HCT116 (cell line): ENCODE measurements at regions of chr4 and their contacts with region 1.

Region 1: GRCh38 chr4:125283707-125284279 is 31.0 kb upstream of the FAT4 start:
- DNase-seq: peak; percentile 18
- ATAC-seq: peak; percentile 53; the same call in 1 of the 2 replicates
- H3K4me3 ChIP-seq: no peak overlapping the region
- H3K27ac ChIP-seq: no peak overlapping the region
- H3K4me1 ChIP-seq: no peaks in the 10 kb centered on the region
- H3K27me3 ChIP-seq: no peaks in the 10 kb centered on the region
- CTCF ChIP-seq: peak; percentile 22 to 68 (median 55); a peak in 4 of 6 replicates
- POLR2A ChIP-seq: no peak
- RAD21 ChIP-seq: peak; percentile 75

Region 2: GRCh38 chr4:123776254-123776653 is 1507.5 kb before region 1 on chr4:
- CTCF ChIA-PET with region 1: no interaction called
- POLR2A ChIA-PET with region 1: no interaction called
- RAD21 ChIA-PET with region 1: no interaction called
- intact Hi-C with region 1: loop called (anchors 10 kb)
- DNase-seq: no peak
- ATAC-seq: no peak
- H3K4me3 ChIP-seq: no peak overlapping the region
- H3K27ac ChIP-seq: no peak overlapping the region
- H3K4me1 ChIP-seq: no peaks in the 10 kb centered on the region
- H3K27me3 ChIP-seq: no peaks in the 10 kb centered on the region
- CTCF ChIP-seq: no peak
- POLR2A ChIP-seq: no peak
- RAD21 ChIP-seq: no peak

Region 3: DNA sequence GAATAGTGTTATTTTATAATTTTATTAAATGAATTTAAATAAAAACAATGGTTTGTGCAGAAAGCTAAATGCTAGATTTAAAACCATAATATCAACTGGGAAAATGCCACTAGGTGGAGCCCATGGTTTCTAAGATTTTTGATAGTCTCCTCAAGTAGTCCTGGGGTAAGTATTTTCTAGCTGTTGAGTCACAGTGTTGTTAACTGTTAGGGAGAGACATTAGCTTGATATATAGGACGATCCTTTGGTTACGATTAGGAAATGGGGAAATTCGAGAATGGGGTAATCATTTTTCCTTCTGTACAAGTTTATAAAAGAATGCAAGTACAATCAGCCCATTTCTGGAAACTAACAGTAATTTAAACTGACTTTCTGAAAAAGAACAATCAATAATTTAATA is 949.7 kb before region 1 on chr4:
- CTCF ChIA-PET with region 1: interaction called, 33 read pairs
- POLR2A ChIA-PET with region 1: no interaction called
- RAD21 ChIA-PET with region 1: interaction called, 5 to 6 read pairs
- intact Hi-C with region 1: loop called (anchors 1 kb)
- DNase-seq: peak; percentile 60
- ATAC-seq: peak; percentile 91
- H3K4me3 ChIP-seq: 0 out of 4 replicates have a peak overlapping the region, but pooled peaks of 1 of the 2 experiments have one; percentile 8
- H3K27ac ChIP-seq: no peak overlapping the region
- H3K4me1 ChIP-seq: peaks cover 0 to 3% of the 10 kb centered on the region in 2 experiments; a peak in 1 of 4 replicates
- H3K27me3 ChIP-seq: no peaks in the 10 kb centered on the region
- CTCF ChIP-seq: peak; percentile 48 to 70 (median 48); a peak in 5 of 6 replicates
- POLR2A ChIP-seq: no peak
- RAD21 ChIP-seq: peak; percentile 85

Region 4: DNA sequence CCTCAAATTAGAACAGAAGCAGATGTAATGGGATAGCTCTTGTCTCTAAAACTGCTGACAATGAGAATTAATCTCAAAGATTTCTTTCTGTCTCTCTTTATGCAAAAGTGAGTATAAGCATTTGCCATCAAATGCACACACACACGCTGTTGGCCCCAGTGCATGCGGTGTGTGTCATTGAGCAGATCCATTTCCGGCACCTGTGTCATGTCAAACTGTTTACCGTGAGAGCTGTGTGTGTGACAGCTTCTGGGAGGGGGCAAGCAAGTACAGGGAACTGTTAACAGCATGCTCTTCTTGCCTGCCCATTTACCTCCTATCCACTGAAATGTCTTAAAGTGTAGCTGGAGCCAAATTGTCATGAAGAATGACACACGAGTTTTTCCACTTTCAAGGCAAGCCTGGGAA is 266.9 kb before region 1 on chr4:
- CTCF ChIA-PET with region 1: no interaction called
- POLR2A ChIA-PET with region 1: no interaction called
- RAD21 ChIA-PET with region 1: no interaction called
- intact Hi-C with region 1: no loop called
- DNase-seq: no peak
- ATAC-seq: no peak
- H3K4me3 ChIP-seq: no peak overlapping the region
- H3K27ac ChIP-seq: no peak overlapping the region
- H3K4me1 ChIP-seq: no peaks in the 10 kb centered on the region
- H3K27me3 ChIP-seq: no peaks in the 10 kb centered on the region
- CTCF ChIP-seq: no peak
- POLR2A ChIP-seq: no peak
- RAD21 ChIP-seq: no peak